Naive thymus-derived CD4-positive, alpha-beta T cell (primary cell): ENCODE measurements at regions of chr1 and their contacts with region 1.

Region 1: GRCh38 chr1:19485362-19486187 is at the start of gene CAPZB:
- DNase-seq: peak; percentile 84 to 94 (median 91)
- ATAC-seq: peak; percentile 94
- H3K4me3 ChIP-seq: peak within 1 kb of the TSS; percentile 87
- H3K4me3 Mint-ChIP-seq: peak within 1 kb of the TSS; percentile 92 to 98 (median 94)
- H3K27ac ChIP-seq: peak within 1 kb of the TSS; percentile 97
- H3K27ac Mint-ChIP-seq: peak within 1 kb of the TSS; percentile 88 to 97 (median 96)
- H3K4me1 ChIP-seq: peaks cover 52 to 59% of the 10 kb centered on the region in 2 donors
- H3K4me1 Mint-ChIP-seq: peaks cover 59 to 71% (median 67%) of the 10 kb centered on the region in 7 donors
- H3K27me3 ChIP-seq: no peaks in the 10 kb centered on the region
- H3K27me3 Mint-ChIP-seq: no peaks in the 10 kb centered on the region
- total RNA-seq, gene CAPZB: 216 to 519 (median 264) TPM

Region 2: GRCh38 chr1:18956369-18957135 is 529.0 kb before region 1 on chr1 and contains the start of gene IFFO2:
- CTCF ChIA-PET with region 1: no interaction called
- POLR2A ChIA-PET with region 1: no interaction called
- intact Hi-C with region 1: loop called in 1 of 2 experiments (anchors 10 kb)
- DNase-seq: peak; percentile 95 to 100 (median 97)
- ATAC-seq: peak; percentile 90
- H3K4me3 ChIP-seq: peak within 1 kb of the TSS; percentile 66
- H3K4me3 Mint-ChIP-seq: peak within 1 kb of the TSS; percentile 89 to 96 (median 93)
- H3K27ac ChIP-seq: peak within 1 kb of the TSS; percentile 98
- H3K27ac Mint-ChIP-seq: peak within 1 kb of the TSS; percentile 37 to 99 (median 92)
- H3K4me1 ChIP-seq: peaks cover 51 to 52% of the 10 kb centered on the region in 2 donors
- H3K4me1 Mint-ChIP-seq: peaks cover 47 to 58% (median 52%) of the 10 kb centered on the region in 7 donors
- H3K27me3 ChIP-seq: no peaks in the 10 kb centered on the region
- H3K27me3 Mint-ChIP-seq: peaks cover 0 to 28% (median 0%) of the 10 kb centered on the region in 5 donors
- total RNA-seq, gene IFFO2: 20.5 to 57.1 (median 28.2) TPM

Region 3: GRCh38 chr1:19311959-19312781 is 173.4 kb before region 1 on chr1 and contains the starts of genes AKR7A2 and SLC66A1:
- CTCF ChIA-PET with region 1: no interaction called
- POLR2A ChIA-PET with region 1: no interaction called
- intact Hi-C with region 1: loop called in 1 of 2 experiments (anchors 1 kb)
- DNase-seq: peak; percentile 68 to 97 (median 91)
- ATAC-seq: peak; percentile 98
- H3K4me3 ChIP-seq: peak within 1 kb of the TSS; percentile 76
- H3K4me3 Mint-ChIP-seq: peak within 1 kb of the TSS; percentile 86 to 94 (median 91)
- H3K27ac ChIP-seq: peak within 1 kb of the TSS; percentile 85
- H3K27ac Mint-ChIP-seq: peak within 1 kb of the TSS; percentile 33 to 83 (median 80)
- H3K4me1 ChIP-seq: peaks cover 16 to 17% of the 10 kb centered on the region in 2 donors
- H3K4me1 Mint-ChIP-seq: peaks cover 29 to 49% (median 44%) of the 10 kb centered on the region in 7 donors
- H3K27me3 ChIP-seq: no peaks in the 10 kb centered on the region
- H3K27me3 Mint-ChIP-seq: no peaks in the 10 kb centered on the region
- total RNA-seq, gene AKR7A2: 15.7 to 33.9 (median 25.2) TPM
- total RNA-seq, gene SLC66A1: 3.8 to 8.4 (median 7.2) TPM

Region 4: GRCh38 chr1:19416921-19417470 is 68.6 kb before region 1 on chr1:
- CTCF ChIA-PET with region 1: no interaction called
- POLR2A ChIA-PET with region 1: no interaction called
- intact Hi-C with region 1: no loop called
- DNase-seq: no peak
- ATAC-seq: no peak
- H3K4me3 ChIP-seq: no peak overlapping the region
- H3K4me3 Mint-ChIP-seq: no peak overlapping the region
- H3K27ac ChIP-seq: peak overlapping the region; percentile 1
- H3K27ac Mint-ChIP-seq: peak overlapping the region in 8 of 9 donors; percentile 20 to 83 (median 63)
- H3K4me1 ChIP-seq: peaks cover 12 to 20% of the 10 kb centered on the region in 2 donors
- H3K4me1 Mint-ChIP-seq: peaks cover 53 to 94% (median 83%) of the 10 kb centered on the region in 7 donors
- H3K27me3 ChIP-seq: no peaks in the 10 kb centered on the region
- H3K27me3 Mint-ChIP-seq: no peaks in the 10 kb centered on the region

Region 5: DNA sequence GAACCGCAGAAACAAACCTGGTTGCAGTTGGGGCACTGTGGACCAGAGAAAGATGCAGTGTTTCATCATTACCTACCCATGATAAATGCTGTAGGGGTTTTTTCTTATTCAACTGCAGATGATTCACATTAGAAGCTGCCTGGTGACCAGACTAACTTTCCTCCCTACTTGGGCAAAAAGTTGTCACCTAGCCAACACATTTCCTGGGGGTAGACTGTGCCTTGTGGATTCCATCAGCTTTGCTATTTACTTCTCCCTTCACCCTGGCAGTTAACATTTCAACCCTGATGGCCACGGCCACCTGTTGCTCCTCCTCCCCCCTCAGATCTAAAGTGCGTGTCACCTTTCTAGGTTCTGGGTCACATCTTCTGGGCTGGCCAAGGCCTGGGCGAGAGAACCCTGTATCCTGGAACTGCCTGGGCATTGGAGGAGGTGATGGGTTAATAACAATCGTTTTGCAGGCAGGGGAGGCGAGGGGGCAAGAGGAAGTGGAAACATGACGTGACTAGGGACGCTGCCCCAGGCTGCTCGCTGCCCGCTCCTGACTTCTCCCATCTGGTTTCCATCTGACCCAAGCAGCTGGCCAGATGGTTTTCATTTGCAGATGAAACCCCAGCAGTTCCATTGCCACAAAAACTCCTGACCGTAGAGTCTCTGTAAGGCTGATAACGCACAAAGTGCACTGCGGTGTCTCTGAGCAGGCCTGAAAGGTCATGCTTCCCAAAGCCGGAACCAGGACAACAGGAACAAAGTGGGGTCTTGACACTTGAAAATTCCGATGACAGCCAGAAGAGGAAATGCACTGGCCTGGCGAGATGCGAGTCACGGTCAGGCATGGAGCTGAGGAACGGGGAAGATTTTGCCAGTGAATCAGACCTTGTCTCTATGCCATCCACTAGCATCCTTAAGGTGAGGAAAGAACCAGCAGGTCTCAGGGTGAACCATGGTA is 36.8 kb before region 1 on chr1:
- CTCF ChIA-PET with region 1: interaction called, 3 read pairs
- POLR2A ChIA-PET with region 1: interaction called, 7 read pairs
- intact Hi-C with region 1: loop called (anchors 2 to 5 kb)
- DNase-seq: no peak
- ATAC-seq: peak; percentile 51
- H3K4me3 ChIP-seq: no peak overlapping the region
- H3K4me3 Mint-ChIP-seq: peak overlapping the region; percentile 25 to 77 (median 58)
- H3K27ac ChIP-seq: peak overlapping the region; percentile 25
- H3K27ac Mint-ChIP-seq: peak overlapping the region; percentile 45 to 92 (median 83)
- H3K4me1 ChIP-seq: peaks cover 55 to 83% of the 10 kb centered on the region in 2 donors
- H3K4me1 Mint-ChIP-seq: peaks cover 76 to 97% (median 89%) of the 10 kb centered on the region in 7 donors
- H3K27me3 ChIP-seq: no peaks in the 10 kb centered on the region
- H3K27me3 Mint-ChIP-seq: no peaks in the 10 kb centered on the region

Region 6: DNA sequence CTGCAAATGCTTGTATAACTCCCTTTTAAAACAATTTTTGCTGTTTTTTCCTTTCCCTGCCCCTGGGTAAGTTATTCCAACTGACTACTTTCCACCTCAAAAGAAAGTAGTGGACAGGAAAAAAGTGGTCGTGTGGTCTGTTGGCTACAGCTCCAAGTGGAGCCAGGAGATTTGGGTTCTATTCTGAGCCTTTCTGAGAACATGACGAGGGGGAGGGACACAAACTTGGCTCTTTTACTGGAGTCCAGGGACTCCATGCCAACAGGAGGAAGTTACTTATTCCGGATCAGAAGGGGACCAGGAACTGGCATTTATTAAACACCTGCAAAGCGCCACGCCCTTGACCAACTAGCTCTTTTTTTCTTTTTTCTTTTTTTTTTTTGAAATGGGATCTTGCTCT is 78.8 kb after region 1 on chr1:
- CTCF ChIA-PET with region 1: no interaction called
- POLR2A ChIA-PET with region 1: no interaction called
- intact Hi-C with region 1: no loop called
- DNase-seq: no peak
- ATAC-seq: no peak
- H3K4me3 ChIP-seq: no peak overlapping the region
- H3K4me3 Mint-ChIP-seq: no peak overlapping the region
- H3K27ac ChIP-seq: no peak overlapping the region
- H3K27ac Mint-ChIP-seq: peak overlapping the region in 1 of 9 donors; percentile 84
- H3K4me1 ChIP-seq: no peaks in the 10 kb centered on the region
- H3K4me1 Mint-ChIP-seq: peaks cover 0 to 1% (median 0%) of the 10 kb centered on the region in 7 donors
- H3K27me3 ChIP-seq: no peaks in the 10 kb centered on the region
- H3K27me3 Mint-ChIP-seq: no peaks in the 10 kb centered on the region

Region 7: DNA sequence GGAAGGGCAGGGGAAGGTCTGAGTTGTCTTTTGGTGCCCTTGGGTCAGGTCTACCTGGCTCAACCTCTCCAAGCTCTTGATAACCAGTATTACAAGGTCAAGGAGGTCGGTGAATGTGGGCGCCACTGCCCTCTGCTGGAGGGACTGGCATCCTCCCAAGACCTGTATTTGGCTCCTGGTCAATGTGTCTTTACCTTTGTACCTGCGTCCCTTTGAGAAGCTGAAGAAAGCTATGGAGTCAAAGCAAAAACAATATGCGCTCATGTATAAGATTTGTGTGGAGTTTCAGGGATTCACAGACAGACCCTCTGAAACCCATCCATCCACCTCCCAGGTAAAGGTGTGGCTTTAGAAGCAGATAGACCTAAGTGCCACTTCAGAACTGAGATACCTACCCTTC is 96.7 kb after region 1 on chr1:
- CTCF ChIA-PET with region 1: interaction called, 7 read pairs
- POLR2A ChIA-PET with region 1: interaction called, 8 read pairs
- intact Hi-C with region 1: loop called (anchors 1 kb)
- DNase-seq: peak; percentile 37 to 72 (median 59)
- ATAC-seq: peak; percentile 94
- H3K4me3 ChIP-seq: no peak overlapping the region
- H3K4me3 Mint-ChIP-seq: no peak overlapping the region
- H3K27ac ChIP-seq: no peak overlapping the region
- H3K27ac Mint-ChIP-seq: peak overlapping the region in 2 of 9 donors; percentile 15 to 76
- H3K4me1 ChIP-seq: no peaks in the 10 kb centered on the region
- H3K4me1 Mint-ChIP-seq: peaks cover 5 to 15% (median 12%) of the 10 kb centered on the region in 7 donors
- H3K27me3 ChIP-seq: no peaks in the 10 kb centered on the region
- H3K27me3 Mint-ChIP-seq: peaks cover 0 to 8% (median 0%) of the 10 kb centered on the region in 5 donors

Region 8: DNA sequence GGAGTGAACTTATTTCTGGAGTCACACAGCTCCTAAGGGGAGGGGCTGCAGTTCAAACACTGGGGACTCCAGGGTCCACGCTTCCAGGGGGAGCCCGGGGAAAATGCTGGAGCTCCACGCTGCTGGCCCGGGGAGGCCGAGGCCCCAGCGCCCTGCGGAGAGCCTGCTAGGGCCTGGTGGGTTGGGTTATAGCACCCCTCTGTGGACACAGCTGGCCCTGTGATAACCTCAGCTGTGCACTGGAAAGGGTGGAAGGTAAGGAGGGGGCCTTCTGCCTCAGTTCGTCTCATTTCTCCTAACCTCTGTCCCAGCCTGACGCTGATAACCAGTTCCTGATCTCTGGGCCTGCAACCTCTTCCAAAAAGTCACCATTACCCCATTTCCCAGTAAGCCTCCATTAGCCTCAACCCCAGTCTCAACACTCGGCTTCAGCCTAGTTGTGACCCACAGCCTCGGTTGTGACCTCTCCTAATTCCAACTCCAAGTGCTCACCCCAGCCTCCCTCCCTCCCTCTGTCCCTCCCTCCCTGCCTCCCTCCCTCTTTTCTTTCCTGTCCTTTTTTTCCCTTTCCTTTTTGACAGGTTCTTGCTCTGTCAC is 165.7 kb after region 1 on chr1:
- CTCF ChIA-PET with region 1: interaction called, 6 read pairs
- POLR2A ChIA-PET with region 1: interaction called, 3 read pairs
- intact Hi-C with region 1: loop called (anchors 2 kb)
- DNase-seq: peak in 6 of 9 donors; percentile 40 to 55 (median 49)
- ATAC-seq: peak; percentile 60
- H3K4me3 ChIP-seq: no peak overlapping the region
- H3K4me3 Mint-ChIP-seq: no peak overlapping the region
- H3K27ac ChIP-seq: no peak overlapping the region
- H3K27ac Mint-ChIP-seq: peak overlapping the region in 4 of 9 donors; percentile 12 to 65 (median 43)
- H3K4me1 ChIP-seq: peaks cover 3 to 4% of the 10 kb centered on the region in 2 donors
- H3K4me1 Mint-ChIP-seq: peaks cover 10 to 31% (median 18%) of the 10 kb centered on the region in 7 donors
- H3K27me3 ChIP-seq: no peaks in the 10 kb centered on the region
- H3K27me3 Mint-ChIP-seq: peaks cover 0 to 11% (median 0%) of the 10 kb centered on the region in 5 donors